ENCODE measurements at regions of chrX and their contacts with region 1.

Region 1: DNA sequence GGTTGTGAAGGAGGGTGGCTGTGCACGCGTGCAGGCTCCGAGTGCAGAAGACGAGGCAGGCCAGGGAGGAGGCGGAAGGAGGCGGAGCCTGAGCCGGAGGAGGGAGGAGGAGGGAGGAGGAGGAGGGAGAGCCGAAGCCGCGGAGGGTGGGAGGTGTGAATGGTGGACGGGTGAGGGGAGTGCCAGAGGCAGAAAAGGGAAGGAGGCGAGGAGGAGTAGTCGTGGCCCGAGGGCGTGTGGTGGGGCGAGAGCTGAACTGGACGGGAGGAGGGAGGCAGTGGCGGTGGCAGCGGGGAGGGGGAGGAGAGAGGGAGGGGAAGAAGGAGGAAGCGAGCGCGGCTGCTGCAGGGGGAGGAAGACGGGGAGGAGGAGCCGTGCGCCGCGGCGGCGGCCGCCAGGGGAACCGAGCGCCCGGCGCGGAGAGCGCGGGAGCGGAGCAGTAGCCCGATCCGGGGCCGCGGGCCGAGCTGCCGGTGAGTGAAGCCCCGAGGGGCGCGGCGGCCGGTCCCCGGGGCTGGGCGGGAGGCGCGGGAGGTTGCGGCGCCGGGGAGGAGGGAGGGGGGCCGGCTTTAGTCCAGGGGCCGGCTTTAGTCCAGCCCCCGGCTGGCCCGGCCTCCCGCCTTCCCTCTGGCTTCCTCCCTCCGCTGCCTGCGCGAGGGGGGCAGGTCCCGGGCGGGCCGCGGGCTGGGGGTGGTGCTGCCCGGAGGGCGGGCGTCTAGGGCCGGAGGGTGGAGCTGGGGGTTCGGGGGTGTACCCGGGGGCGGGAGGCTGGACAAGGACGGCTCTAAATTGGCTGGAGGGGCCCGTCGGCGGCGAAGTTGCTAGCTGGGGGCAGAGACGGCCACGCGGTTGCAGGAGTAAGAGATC is at the start of gene TMEM164:
- DNase-seq: peak; percentile 38 to 88
- H3K4me3 ChIP-seq: peak within 1 kb of the TSS; percentile 56 to 66
- H3K27ac ChIP-seq: peak within 1 kb of the TSS; percentile 59 to 83
- H3K4me1 ChIP-seq: no peaks in the 10 kb centered on the region
- H3K27me3 ChIP-seq: no peaks in the 10 kb centered on the region
- CTCF ChIP-seq: peak in 1 of 3 experiments; percentile 32
- total RNA-seq, gene TMEM164: 15.0 TPM

Region 2: GRCh38 chrX:109732780-109733657 is 269.5 kb before region 1 on chrX and contains the start of gene ACSL4:
- intact Hi-C with region 1: loop called (anchors 10 kb)
- DNase-seq: peak; percentile 44 to 90
- H3K4me3 ChIP-seq: peak within 1 kb of the TSS; percentile 52 to 67
- H3K27ac ChIP-seq: peak within 1 kb of the TSS; percentile 78 to 82
- H3K4me1 ChIP-seq: no peaks in the 10 kb centered on the region
- H3K27me3 ChIP-seq: no peaks in the 10 kb centered on the region
- CTCF ChIP-seq: no peak
- total RNA-seq, gene ACSL4: 18.5 TPM

Region 3: GRCh38 chrX:109826954-109827708 is 175.4 kb before region 1 on chrX:
- intact Hi-C with region 1: no loop called
- DNase-seq: no peak
- H3K4me3 ChIP-seq: no peak overlapping the region
- H3K27ac ChIP-seq: no peak overlapping the region
- H3K4me1 ChIP-seq: no peaks in the 10 kb centered on the region
- H3K27me3 ChIP-seq: no peaks in the 10 kb centered on the region
- CTCF ChIP-seq: no peak

Region 4: DNA sequence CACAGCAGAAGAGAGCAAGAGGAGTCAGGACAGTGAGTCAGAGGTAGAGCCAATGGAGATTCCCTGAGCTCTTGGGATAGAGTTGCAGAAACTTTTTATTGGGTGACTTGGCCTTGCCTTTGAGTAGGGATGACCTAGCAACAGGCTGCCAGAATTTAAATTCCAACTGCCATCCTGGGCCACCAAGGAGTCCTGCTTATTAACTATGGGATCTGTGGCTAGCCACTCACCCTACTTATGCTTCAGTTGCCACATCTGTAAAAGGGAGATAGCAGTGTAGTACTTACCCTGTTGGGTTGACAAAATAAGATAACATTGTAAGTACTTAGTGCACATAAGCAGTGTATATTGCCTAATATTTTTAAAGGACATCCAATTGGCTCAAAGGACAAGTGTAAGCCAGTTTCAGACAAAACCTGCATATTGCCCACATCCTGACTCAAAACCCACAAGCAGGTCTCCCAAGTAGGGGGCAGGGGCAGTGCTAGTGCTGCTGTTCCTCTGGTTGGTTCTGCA is 43.1 kb before region 1 on chrX:
- intact Hi-C with region 1: no loop called
- DNase-seq: no peak
- H3K4me3 ChIP-seq: no peak overlapping the region
- H3K27ac ChIP-seq: no peak overlapping the region
- H3K4me1 ChIP-seq: no peaks in the 10 kb centered on the region
- H3K27me3 ChIP-seq: no peaks in the 10 kb centered on the region
- CTCF ChIP-seq: no peak

Region 5: DNA sequence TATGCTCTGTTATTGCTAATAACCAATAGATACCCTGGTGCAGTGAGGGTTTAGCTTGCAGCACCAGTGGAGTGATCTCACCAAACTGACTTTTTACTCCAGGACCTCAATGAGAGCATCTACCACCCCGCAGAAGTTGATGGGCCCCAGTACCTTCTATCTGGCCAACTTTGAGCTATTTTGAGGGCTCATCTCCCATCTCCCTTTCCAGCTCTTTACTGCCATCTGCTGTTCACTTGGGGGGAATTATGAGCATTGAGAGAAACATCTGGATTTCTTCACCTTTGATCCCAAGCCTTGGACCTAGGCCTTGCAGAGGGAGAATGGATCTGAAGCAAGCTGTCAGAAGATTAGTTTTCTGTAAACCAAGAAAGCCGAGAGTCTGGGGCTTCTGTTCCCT is 144.0 kb after region 1 on chrX:
- intact Hi-C with region 1: loop called (anchors 5 kb)
- DNase-seq: no peak
- H3K4me3 ChIP-seq: no peak overlapping the region
- H3K27ac ChIP-seq: peak overlapping the region in 1 of 2 donors; percentile 20
- H3K4me1 ChIP-seq: peaks cover 0 to 6% of the 10 kb centered on the region in 2 donors
- H3K27me3 ChIP-seq: no peaks in the 10 kb centered on the region
- CTCF ChIP-seq: peak; percentile 44 to 75 (median 62)

Region 6: DNA sequence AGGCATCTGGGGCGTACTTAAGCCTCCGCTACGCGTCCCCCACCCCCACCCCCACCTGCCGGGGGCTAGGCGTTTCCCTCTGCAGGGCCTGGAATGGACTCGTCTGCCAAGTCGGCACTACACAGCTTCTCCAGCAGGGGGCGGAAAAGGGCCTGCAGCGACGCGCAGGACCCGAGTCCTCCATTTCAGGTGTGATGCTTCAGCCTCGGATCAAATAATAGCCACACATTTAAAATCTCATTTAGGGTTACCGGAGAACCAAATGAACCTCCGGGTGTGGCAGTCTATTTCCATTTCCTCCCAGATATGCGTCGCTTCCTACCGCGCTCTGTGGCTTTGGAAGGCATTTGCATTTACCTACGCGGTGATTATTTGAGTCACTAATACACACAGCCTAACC is 1096.3 kb after region 1 on chrX:
- intact Hi-C with region 1: loop called (anchors 10 kb)
- DNase-seq: peak in 1 of 2 donors; percentile 65
- H3K4me3 ChIP-seq: peak overlapping the region in 1 of 2 donors; percentile 76
- H3K27ac ChIP-seq: peak overlapping the region in 1 of 2 donors; percentile 48
- H3K4me1 ChIP-seq: no peaks in the 10 kb centered on the region
- H3K27me3 ChIP-seq: no peaks in the 10 kb centered on the region
- CTCF ChIP-seq: peak; percentile 51 to 80 (median 68)

Measured in ascending aorta (tissue), 2 donors.